ENCODE measurements at regions of chr12 and their contacts with region 1.

Region 1: DNA sequence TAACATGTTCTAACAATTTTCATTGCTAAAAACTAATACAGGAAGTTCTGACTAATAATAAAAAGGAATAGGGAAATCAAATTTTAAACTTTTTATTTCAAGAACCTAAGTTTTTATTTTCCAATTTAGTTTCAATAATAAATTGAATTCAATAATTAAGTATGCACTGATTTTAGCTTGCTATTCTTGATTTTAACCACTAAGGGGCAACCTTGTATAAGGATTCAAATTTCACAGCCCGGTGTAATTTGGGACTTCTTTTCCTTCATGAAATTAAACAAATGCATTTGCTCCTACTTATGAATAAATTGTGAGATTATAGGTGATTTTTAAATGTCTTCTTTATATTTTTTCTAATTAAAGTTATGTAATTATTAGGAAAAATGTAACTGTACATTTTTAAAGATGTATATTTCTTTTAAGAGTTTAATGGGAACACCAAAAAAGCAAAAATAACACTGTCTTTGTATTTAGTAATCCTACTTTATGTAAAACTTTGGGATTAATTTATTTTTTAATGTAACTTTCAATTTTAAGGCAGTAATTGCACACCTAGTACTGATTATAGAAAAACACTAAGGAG is 241.4 kb upstream of the PDZRN4 start:
- DNase-seq: peak; percentile 61
- H3K4me3 ChIP-seq: no peak overlapping the region
- H3K27ac ChIP-seq: no peak overlapping the region
- H3K4me1 ChIP-seq: no peaks in the 10 kb centered on the region
- H3K27me3 ChIP-seq: no peaks in the 10 kb centered on the region
- CTCF ChIP-seq: peak; percentile 75

Region 2: DNA sequence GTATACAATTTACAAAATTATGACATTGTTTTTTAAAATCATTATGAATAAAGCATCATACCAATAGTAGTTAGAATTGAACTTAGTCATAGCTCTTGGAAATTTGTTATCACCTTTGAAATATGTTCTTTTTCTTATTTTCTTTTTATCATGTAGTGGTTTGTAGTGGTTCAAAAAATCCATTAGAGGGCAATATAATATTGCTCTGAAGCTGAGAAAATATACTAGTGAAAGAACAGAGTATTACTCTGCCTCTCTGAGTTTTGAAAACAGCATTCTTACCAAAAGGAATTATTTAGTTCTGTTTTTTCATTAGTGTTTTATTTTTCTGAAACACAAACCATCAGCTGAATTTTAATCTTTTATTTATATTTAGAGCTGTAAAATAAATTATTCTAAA is 317.6 kb after region 1 on chr12:
- CTCF ChIA-PET with region 1: no interaction called
- POLR2A ChIA-PET with region 1: no interaction called
- intact Hi-C with region 1: loop called (anchors 5 kb)
- DNase-seq: no peak
- H3K4me3 ChIP-seq: no peak overlapping the region
- H3K27ac ChIP-seq: no peak overlapping the region
- H3K4me1 ChIP-seq: no peaks in the 10 kb centered on the region
- H3K27me3 ChIP-seq: no peaks in the 10 kb centered on the region
- CTCF ChIP-seq: peak; percentile 57

Region 3: GRCh38 chr12:41339784-41340183 is 393.1 kb after region 1 on chr12:
- CTCF ChIA-PET with region 1: no interaction called
- POLR2A ChIA-PET with region 1: no interaction called
- intact Hi-C with region 1: no loop called
- DNase-seq: no peak
- H3K4me3 ChIP-seq: no peak overlapping the region
- H3K27ac ChIP-seq: no peak overlapping the region
- H3K4me1 ChIP-seq: no peaks in the 10 kb centered on the region
- H3K27me3 ChIP-seq: no peaks in the 10 kb centered on the region
- CTCF ChIP-seq: no peak

Region 4: DNA sequence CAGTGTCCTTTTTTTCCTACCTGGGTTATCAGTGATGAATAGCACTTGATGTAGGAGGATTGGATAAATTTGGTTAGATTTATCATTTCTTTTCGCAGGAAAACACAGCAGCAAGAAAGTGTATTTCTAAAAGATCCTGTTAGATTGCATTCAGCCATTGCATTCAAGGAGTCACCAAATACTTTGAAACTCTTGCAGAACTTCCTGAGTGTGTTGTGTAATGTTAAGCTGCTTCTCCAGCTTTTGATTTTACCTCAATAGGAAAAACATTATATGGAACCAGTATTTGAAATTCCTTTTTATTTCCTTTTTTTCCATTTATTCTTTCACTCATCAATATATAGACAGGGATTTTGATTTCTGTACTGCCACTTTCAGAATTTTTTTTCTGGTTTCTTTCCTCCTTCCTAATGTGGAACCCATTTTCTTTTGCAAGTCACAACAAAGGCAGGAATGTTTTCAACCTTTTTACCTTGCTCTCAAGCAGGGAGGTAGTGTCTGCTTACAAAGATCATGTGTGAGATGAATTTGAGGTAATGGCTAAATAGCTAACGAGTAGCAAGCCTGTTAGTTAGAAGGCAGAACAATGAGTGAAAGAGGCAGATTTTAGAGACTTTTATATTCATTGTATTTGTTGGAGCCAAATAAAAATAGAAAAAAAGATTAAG is 1435.4 kb after region 1 on chr12:
- CTCF ChIA-PET with region 1: no interaction called
- POLR2A ChIA-PET with region 1: no interaction called
- intact Hi-C with region 1: loop called (anchors 5 kb)
- DNase-seq: no peak
- H3K4me3 ChIP-seq: no peak overlapping the region
- H3K27ac ChIP-seq: no peak overlapping the region
- H3K4me1 ChIP-seq: no peaks in the 10 kb centered on the region
- H3K27me3 ChIP-seq: no peaks in the 10 kb centered on the region
- CTCF ChIP-seq: no peak

Region 5: GRCh38 chr12:42568952-42569915 is 1622.5 kb after region 1 on chr12:
- CTCF ChIA-PET with region 1: no interaction called
- POLR2A ChIA-PET with region 1: no interaction called
- intact Hi-C with region 1: loop called (anchors 5 kb)
- DNase-seq: peak; percentile 74
- H3K4me3 ChIP-seq: no peak overlapping the region
- H3K27ac ChIP-seq: no peak overlapping the region
- H3K4me1 ChIP-seq: no peaks in the 10 kb centered on the region
- H3K27me3 ChIP-seq: no peaks in the 10 kb centered on the region
- CTCF ChIP-seq: peak; percentile 71

Measured in A673 (cell line).